ENCODE measurements at regions of chr20 and their contacts with region 1.

Region 1: GRCh38 chr20:12977328-12978125 is 31.2 kb upstream of the SPTLC3 start:
- DNase-seq: peak; percentile 92
- ATAC-seq: peak; percentile 80
- H3K4me3 ChIP-seq: peak overlapping the region; percentile 1 to 43 (median 40); a peak in 5 of 6 replicates
- H3K27ac ChIP-seq: peak overlapping the region; percentile 80
- H3K4me1 ChIP-seq: peaks cover 61% of the 10 kb centered on the region
- H3K27me3 ChIP-seq: no peaks in the 10 kb centered on the region
- CTCF ChIP-seq: no peak
- EP300 ChIP-seq: peak in 1 of 2 experiments; percentile 97; a peak in 2 of 4 replicates
- POLR2A ChIP-seq: 0 out of 4 replicates have a peak, but pooled peaks of 1 of the 2 experiments have one; percentile 22
- RAD21 ChIP-seq: no peak

Region 2: DNA sequence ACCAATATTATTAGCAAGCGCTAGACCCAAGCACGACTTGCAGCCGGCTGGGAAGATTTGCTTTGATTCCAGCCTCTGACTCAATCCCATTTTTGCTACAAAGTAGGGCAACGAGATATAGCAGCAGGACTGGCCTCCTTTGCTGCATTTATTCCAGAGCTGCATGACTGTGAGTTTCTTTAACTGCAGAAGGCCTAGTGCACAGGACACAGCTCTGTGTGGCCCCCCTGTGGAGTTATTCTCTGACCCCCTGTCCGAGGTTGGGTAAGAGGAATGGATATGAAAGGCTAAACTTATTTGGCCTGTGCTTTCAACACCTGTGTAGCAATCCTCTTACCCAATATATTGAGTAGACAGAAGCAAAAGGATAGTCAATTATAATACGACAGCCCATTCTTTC is 102.0 kb before region 1 on chr20:
- CTCF ChIA-PET with region 1: no interaction called
- POLR2A ChIA-PET with region 1: no interaction called
- in situ Hi-C with region 1: no loop called
- intact Hi-C with region 1: no loop called
- DNase-seq: peak; percentile 35
- ATAC-seq: peak; percentile 82
- H3K4me3 ChIP-seq: no peak overlapping the region
- H3K27ac ChIP-seq: no peak overlapping the region
- H3K4me1 ChIP-seq: no peaks in the 10 kb centered on the region
- H3K27me3 ChIP-seq: no peaks in the 10 kb centered on the region
- CTCF ChIP-seq: no peak
- EP300 ChIP-seq: no peak
- POLR2A ChIP-seq: no peak
- RAD21 ChIP-seq: no peak

Region 3: GRCh38 chr20:13022401-13023155 is 45.1 kb after region 1 on chr20:
- CTCF ChIA-PET with region 1: no interaction called
- POLR2A ChIA-PET with region 1: interaction called, 12 read pairs
- in situ Hi-C with region 1: no loop called
- intact Hi-C with region 1: no loop called
- DNase-seq: no peak
- ATAC-seq: peak; percentile 31
- H3K4me3 ChIP-seq: no peak overlapping the region
- H3K27ac ChIP-seq: no peak overlapping the region
- H3K4me1 ChIP-seq: peaks cover 30% of the 10 kb centered on the region
- H3K27me3 ChIP-seq: no peaks in the 10 kb centered on the region
- CTCF ChIP-seq: no peak
- EP300 ChIP-seq: no peak
- POLR2A ChIP-seq: no peak
- RAD21 ChIP-seq: no peak

Region 4: DNA sequence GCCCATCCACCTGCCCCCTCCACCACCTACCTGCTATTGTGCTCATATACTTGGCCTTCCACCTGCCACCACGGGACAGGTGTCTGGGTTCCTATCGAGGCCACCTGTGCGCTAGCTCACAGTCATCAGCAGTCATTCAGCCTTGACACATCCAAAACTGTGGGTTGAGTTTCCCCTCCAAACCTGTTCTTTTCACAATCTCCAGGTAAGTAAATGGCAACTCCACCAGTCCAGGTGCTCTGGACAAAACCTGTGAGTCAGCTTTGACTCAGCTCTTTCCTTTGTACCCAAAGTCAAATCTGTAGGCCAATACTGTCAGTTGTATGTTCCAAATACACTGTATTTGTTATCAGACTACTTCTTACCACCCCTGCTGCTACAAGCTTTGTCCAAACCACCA is 83.9 kb after region 1 on chr20:
- CTCF ChIA-PET with region 1: no interaction called
- POLR2A ChIA-PET with region 1: interaction called, 31 read pairs
- in situ Hi-C with region 1: no loop called
- intact Hi-C with region 1: loop called (anchors 1 kb)
- DNase-seq: no peak
- ATAC-seq: no peak
- H3K4me3 ChIP-seq: no peak overlapping the region
- H3K27ac ChIP-seq: peak overlapping the region; percentile 5
- H3K4me1 ChIP-seq: peaks cover 54% of the 10 kb centered on the region
- H3K27me3 ChIP-seq: no peaks in the 10 kb centered on the region
- CTCF ChIP-seq: no peak
- EP300 ChIP-seq: no peak
- POLR2A ChIP-seq: no peak
- RAD21 ChIP-seq: no peak

Region 5: GRCh38 chr20:13089950-13090469 is 112.5 kb after region 1 on chr20:
- CTCF ChIA-PET with region 1: interaction called, 4 read pairs
- POLR2A ChIA-PET with region 1: interaction called, 36 read pairs
- in situ Hi-C with region 1: no loop called
- intact Hi-C with region 1: loop called (anchors 1 kb)
- DNase-seq: peak; percentile 99
- ATAC-seq: peak; percentile 99
- H3K4me3 ChIP-seq: peak overlapping the region in 1 of 3 experiments; percentile 1; a peak in 1 of 6 replicates
- H3K27ac ChIP-seq: peak overlapping the region; percentile 75
- H3K4me1 ChIP-seq: peaks cover 67% of the 10 kb centered on the region
- H3K27me3 ChIP-seq: no peaks in the 10 kb centered on the region
- CTCF ChIP-seq: no peak
- EP300 ChIP-seq: peak; percentile 87 to 99; a peak in 3 of 4 replicates
- POLR2A ChIP-seq: no peak
- RAD21 ChIP-seq: peak; percentile 22; the same call in 1 of the 2 replicates

Region 6: GRCh38 chr20:13105864-13106457 is 128.4 kb after region 1 on chr20:
- CTCF ChIA-PET with region 1: interaction called, 164 read pairs
- POLR2A ChIA-PET with region 1: interaction called, 8 read pairs
- in situ Hi-C with region 1: loop called (anchors 5 kb)
- intact Hi-C with region 1: no loop called
- DNase-seq: peak; percentile 62
- ATAC-seq: no peak
- H3K4me3 ChIP-seq: no peak overlapping the region
- H3K27ac ChIP-seq: peak overlapping the region; percentile 28
- H3K4me1 ChIP-seq: peaks cover 36% of the 10 kb centered on the region
- H3K27me3 ChIP-seq: no peaks in the 10 kb centered on the region
- CTCF ChIP-seq: peak; percentile 79
- EP300 ChIP-seq: no peak
- POLR2A ChIP-seq: no peak
- RAD21 ChIP-seq: peak; percentile 88

Measured in HepG2 (cell line).